Sigmoid colon (tissue), 7 donors: ENCODE measurements at regions of chr14 and their contacts with region 1.

Region 1: GRCh38 chr14:22570132-22570949 is 18.7 kb downstream of the DAD1 start:
- DNase-seq: peak; percentile 84
- H3K4me3 ChIP-seq: no peak overlapping the region
- H3K27ac ChIP-seq: peak overlapping the region; percentile 12 to 69 (median 28)
- H3K4me1 ChIP-seq: peaks cover 0 to 32% (median 13%) of the 10 kb centered on the region in 4 donors
- H3K27me3 ChIP-seq: no peaks in the 10 kb centered on the region
- CTCF ChIP-seq: peak; percentile 76 to 85 (median 78)
- EP300 ChIP-seq: no peak
- POLR2A ChIP-seq: no peak

Region 2: DNA sequence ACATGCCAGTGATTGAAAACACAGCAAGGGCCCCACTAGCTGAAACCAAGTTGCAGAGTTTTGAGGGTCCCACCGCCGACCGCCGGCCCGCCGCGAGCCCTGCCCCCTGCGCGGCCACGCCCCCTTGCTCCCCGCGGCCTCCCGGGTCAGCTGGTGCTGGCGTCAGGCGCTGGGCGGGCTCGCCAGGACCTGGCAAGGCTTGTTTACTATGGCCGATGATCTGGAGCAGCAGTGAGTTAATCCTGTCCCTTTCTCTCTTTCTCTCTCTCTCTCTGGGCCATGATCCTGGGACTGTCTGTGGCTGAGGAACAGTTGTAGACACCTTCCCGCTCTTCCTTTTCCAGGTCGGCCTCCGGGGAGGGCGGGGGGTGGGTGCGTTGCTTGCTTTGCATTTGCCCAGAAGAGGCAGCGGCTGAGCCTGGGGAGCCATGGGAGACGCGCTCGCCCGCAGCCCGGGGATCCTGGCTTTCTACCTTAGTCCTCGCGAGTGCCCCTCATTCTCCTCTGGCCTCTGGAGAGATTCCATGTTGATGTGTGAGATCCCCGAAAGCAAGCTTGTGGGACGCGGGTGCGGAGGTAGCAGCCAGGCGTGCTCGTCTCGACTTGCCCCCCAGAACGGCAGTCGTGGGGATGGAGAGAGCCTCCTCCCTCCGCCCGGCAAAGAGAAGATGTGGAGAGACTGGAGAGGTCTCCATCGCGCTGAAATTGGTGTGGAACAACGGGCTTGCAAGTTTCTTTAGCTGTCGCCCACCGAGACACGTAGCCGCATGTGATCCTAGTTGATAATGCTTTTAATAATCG is 28.0 kb after region 1 on chr14 and contains the start of gene ABHD4:
- intact Hi-C with region 1: loop called (anchors 2 kb)
- DNase-seq: peak; percentile 91
- H3K4me3 ChIP-seq: peak within 1 kb of the TSS; percentile 69 to 81 (median 71)
- H3K27ac ChIP-seq: peak within 1 kb of the TSS; percentile 84 to 93 (median 90)
- H3K4me1 ChIP-seq: peaks cover 0 to 27% (median 22%) of the 10 kb centered on the region in 4 donors
- H3K27me3 ChIP-seq: no peaks in the 10 kb centered on the region
- CTCF ChIP-seq: no peak
- EP300 ChIP-seq: no peak
- POLR2A ChIP-seq: peak; percentile 39 to 76
- total RNA-seq, gene ABHD4: 17.4 to 20.4 (median 18.7) TPM

Region 3: GRCh38 chr14:22653012-22653621 is 82.8 kb after region 1 on chr14:
- intact Hi-C with region 1: loop called (anchors 1 kb)
- DNase-seq: peak; percentile 72
- H3K4me3 ChIP-seq: no peak overlapping the region
- H3K27ac ChIP-seq: no peak overlapping the region
- H3K4me1 ChIP-seq: peaks cover 0 to 9% (median 4%) of the 10 kb centered on the region in 4 donors
- H3K27me3 ChIP-seq: no peaks in the 10 kb centered on the region
- CTCF ChIP-seq: peak; percentile 56 to 82 (median 72)
- EP300 ChIP-seq: no peak
- POLR2A ChIP-seq: no peak